ENCODE measurements at regions of chr15 and their contacts with region 1.

Region 1: GRCh38 chr15:60859996-60860494 is 369.1 kb downstream of the RORA start:
- DNase-seq: no peak
- H3K4me3 ChIP-seq: no peak overlapping the region
- H3K4me3 Mint-ChIP-seq: no peak overlapping the region
- H3K27ac ChIP-seq: no peak overlapping the region
- H3K27ac Mint-ChIP-seq: peak overlapping the region in 1 of 7 donors; percentile 1
- H3K4me1 ChIP-seq: peaks cover 6% of the 10 kb centered on the region
- H3K4me1 Mint-ChIP-seq: peaks cover 22 to 44% (median 33%) of the 10 kb centered on the region in 4 donors
- H3K27me3 ChIP-seq: no peaks in the 10 kb centered on the region
- H3K27me3 Mint-ChIP-seq: no peaks in the 10 kb centered on the region

Region 2: GRCh38 chr15:60548101-60548500 is 311.9 kb before region 1 on chr15:
- CTCF ChIA-PET with region 1: interaction called, 10 read pairs
- POLR2A ChIA-PET with region 1: no interaction called
- intact Hi-C with region 1: no loop called
- DNase-seq: peak; percentile 47 to 68 (median 58)
- H3K4me3 ChIP-seq: no peak overlapping the region
- H3K4me3 Mint-ChIP-seq: peak overlapping the region; percentile 68 to 86 (median 77)
- H3K27ac ChIP-seq: peak overlapping the region; percentile 68
- H3K27ac Mint-ChIP-seq: peak overlapping the region; percentile 92 to 99 (median 97)
- H3K4me1 ChIP-seq: peaks cover 100% of the 10 kb centered on the region
- H3K4me1 Mint-ChIP-seq: peaks cover 80 to 100% (median 90%) of the 10 kb centered on the region in 4 donors
- H3K27me3 ChIP-seq: no peaks in the 10 kb centered on the region
- H3K27me3 Mint-ChIP-seq: no peaks in the 10 kb centered on the region

Region 3: DNA sequence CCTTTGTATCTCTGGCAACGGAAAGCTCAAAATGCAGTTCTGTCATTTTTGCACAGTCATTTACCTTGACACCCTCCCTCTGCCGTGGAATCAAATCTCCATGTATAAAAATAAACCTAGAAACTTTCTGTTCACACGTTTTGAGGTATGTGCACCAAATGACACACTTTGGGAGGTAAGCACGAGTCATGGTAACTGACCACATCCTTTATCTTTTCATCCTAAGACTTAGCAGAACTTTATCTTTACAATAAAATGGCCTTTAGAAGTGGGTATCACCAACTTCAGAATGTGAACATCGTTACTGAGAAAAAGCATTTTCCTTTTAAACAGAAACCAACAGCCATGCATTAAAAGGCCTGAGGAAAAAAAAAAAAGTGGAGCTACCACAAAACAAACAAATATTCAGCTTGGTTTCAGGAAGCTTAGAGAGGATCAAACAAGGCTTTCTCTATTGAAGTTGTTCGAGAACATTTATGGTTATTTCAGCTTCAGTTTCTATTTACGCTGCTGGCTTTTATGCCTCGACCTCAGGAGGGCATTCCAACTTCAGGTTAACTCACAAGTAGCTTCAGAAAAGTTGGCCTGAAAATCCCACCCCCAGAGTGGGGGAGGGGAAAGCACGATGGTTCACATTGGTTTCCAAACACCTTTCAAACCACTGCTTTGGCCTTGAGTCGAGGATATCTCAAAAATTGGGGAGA is 210.0 kb before region 1 on chr15:
- CTCF ChIA-PET with region 1: interaction called, 32 read pairs
- POLR2A ChIA-PET with region 1: interaction called, 5 read pairs
- intact Hi-C with region 1: loop called (anchors 5 kb)
- DNase-seq: peak; percentile 73 to 85 (median 81)
- H3K4me3 ChIP-seq: peak overlapping the region in 1 of 2 donors; percentile 46
- H3K4me3 Mint-ChIP-seq: peak overlapping the region; percentile 67 to 92 (median 85)
- H3K27ac ChIP-seq: peak overlapping the region; percentile 66
- H3K27ac Mint-ChIP-seq: peak overlapping the region; percentile 93 to 99 (median 97)
- H3K4me1 ChIP-seq: peaks cover 46% of the 10 kb centered on the region
- H3K4me1 Mint-ChIP-seq: peaks cover 36 to 55% (median 47%) of the 10 kb centered on the region in 4 donors
- H3K27me3 ChIP-seq: no peaks in the 10 kb centered on the region
- H3K27me3 Mint-ChIP-seq: no peaks in the 10 kb centered on the region

Region 4: GRCh38 chr15:60672400-60672799 is 187.6 kb before region 1 on chr15:
- CTCF ChIA-PET with region 1: interaction called, 33 read pairs
- POLR2A ChIA-PET with region 1: interaction called, 6 read pairs
- intact Hi-C with region 1: loop called (anchors 1 kb)
- DNase-seq: peak in 1 of 5 donors; percentile 18
- H3K4me3 ChIP-seq: no peak overlapping the region
- H3K4me3 Mint-ChIP-seq: no peak overlapping the region
- H3K27ac ChIP-seq: no peak overlapping the region
- H3K27ac Mint-ChIP-seq: peak overlapping the region in 1 of 7 donors; percentile 6
- H3K4me1 ChIP-seq: peaks cover 18% of the 10 kb centered on the region
- H3K4me1 Mint-ChIP-seq: peaks cover 10 to 27% (median 20%) of the 10 kb centered on the region in 4 donors
- H3K27me3 ChIP-seq: no peaks in the 10 kb centered on the region
- H3K27me3 Mint-ChIP-seq: no peaks in the 10 kb centered on the region

Region 5: GRCh38 chr15:60798821-60799220 is 61.2 kb before region 1 on chr15:
- CTCF ChIA-PET with region 1: interaction called, 8 read pairs
- POLR2A ChIA-PET with region 1: interaction called, 3 read pairs
- intact Hi-C with region 1: loop called (anchors 1 kb)
- DNase-seq: peak in 1 of 5 donors; percentile 57
- H3K4me3 ChIP-seq: no peak overlapping the region
- H3K4me3 Mint-ChIP-seq: peak overlapping the region in 5 of 8 donors; percentile 25 to 55 (median 48)
- H3K27ac ChIP-seq: peak overlapping the region; percentile 56
- H3K27ac Mint-ChIP-seq: peak overlapping the region; percentile 87 to 98 (median 93)
- H3K4me1 ChIP-seq: peaks cover 95% of the 10 kb centered on the region
- H3K4me1 Mint-ChIP-seq: peaks cover 67 to 97% (median 85%) of the 10 kb centered on the region in 4 donors
- H3K27me3 ChIP-seq: no peaks in the 10 kb centered on the region
- H3K27me3 Mint-ChIP-seq: no peaks in the 10 kb centered on the region

Region 6: DNA sequence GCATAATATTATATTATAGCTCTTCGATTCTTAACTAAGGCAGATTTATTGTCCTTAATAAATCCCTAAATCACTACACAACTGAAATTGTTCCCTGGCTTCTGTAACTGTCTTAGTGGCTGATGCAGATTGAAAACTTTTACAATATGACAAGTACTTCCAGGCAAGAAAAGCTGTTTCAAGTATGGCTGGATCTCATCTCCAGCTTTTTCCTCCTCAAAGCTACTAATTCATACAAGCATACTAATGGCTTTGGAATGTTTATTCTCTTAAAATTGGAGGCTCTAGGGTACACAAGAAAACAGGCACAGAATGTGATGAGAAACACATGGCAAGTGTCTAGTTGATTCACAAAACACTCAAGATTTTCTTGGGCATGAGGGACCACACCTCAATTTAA is 29.6 kb before region 1 on chr15:
- CTCF ChIA-PET with region 1: no interaction called
- POLR2A ChIA-PET with region 1: no interaction called
- intact Hi-C with region 1: no loop called
- DNase-seq: no peak
- H3K4me3 ChIP-seq: no peak overlapping the region
- H3K4me3 Mint-ChIP-seq: no peak overlapping the region
- H3K27ac ChIP-seq: no peak overlapping the region
- H3K27ac Mint-ChIP-seq: no peak overlapping the region
- H3K4me1 ChIP-seq: peaks cover 14% of the 10 kb centered on the region
- H3K4me1 Mint-ChIP-seq: peaks cover 22 to 67% (median 30%) of the 10 kb centered on the region in 4 donors
- H3K27me3 ChIP-seq: no peaks in the 10 kb centered on the region
- H3K27me3 Mint-ChIP-seq: no peaks in the 10 kb centered on the region

Region 7: DNA sequence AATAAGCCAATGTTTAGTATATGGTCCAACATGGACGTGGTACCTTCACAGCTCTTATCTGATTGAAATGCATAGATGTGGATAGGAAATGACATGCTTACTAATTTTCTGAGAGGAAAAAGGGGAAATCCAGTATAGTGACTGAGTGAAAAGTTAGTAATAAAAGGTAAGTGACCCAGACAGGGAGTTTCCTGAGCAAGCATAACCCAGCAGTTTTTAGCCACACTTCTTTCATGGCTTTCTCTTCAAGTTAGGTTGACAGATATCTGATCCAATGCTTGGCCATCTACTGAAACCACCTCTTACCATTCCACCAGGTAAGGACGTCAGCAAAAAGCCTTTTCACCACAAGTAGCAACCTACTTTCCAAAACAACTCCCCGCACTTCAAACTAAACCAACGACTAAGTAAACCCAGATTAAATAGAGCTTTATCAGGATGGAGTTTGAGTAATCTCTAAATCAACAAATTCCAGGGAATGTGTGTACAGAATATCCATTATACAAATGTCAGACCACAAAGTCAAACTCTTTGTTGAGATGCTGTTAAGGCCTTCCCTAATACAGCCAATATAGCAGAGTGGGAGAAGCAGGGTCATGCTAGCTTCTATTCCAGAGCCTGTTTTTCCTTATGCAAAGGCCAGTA is 39.4 kb after region 1 on chr15:
- CTCF ChIA-PET with region 1: interaction called, 9 read pairs
- POLR2A ChIA-PET with region 1: no interaction called
- intact Hi-C with region 1: loop called (anchors 5 kb)
- DNase-seq: peak; percentile 55 to 85 (median 71)
- H3K4me3 ChIP-seq: no peak overlapping the region
- H3K4me3 Mint-ChIP-seq: peak overlapping the region in 3 of 8 donors; percentile 2 to 16 (median 5)
- H3K27ac ChIP-seq: no peak overlapping the region
- H3K27ac Mint-ChIP-seq: peak overlapping the region; percentile 75 to 96 (median 79)
- H3K4me1 ChIP-seq: peaks cover 17% of the 10 kb centered on the region
- H3K4me1 Mint-ChIP-seq: peaks cover 15 to 32% (median 22%) of the 10 kb centered on the region in 4 donors
- H3K27me3 ChIP-seq: no peaks in the 10 kb centered on the region
- H3K27me3 Mint-ChIP-seq: no peaks in the 10 kb centered on the region